ENCODE measurements at regions of chr15 and their contacts with region 1.

Region 1: DNA sequence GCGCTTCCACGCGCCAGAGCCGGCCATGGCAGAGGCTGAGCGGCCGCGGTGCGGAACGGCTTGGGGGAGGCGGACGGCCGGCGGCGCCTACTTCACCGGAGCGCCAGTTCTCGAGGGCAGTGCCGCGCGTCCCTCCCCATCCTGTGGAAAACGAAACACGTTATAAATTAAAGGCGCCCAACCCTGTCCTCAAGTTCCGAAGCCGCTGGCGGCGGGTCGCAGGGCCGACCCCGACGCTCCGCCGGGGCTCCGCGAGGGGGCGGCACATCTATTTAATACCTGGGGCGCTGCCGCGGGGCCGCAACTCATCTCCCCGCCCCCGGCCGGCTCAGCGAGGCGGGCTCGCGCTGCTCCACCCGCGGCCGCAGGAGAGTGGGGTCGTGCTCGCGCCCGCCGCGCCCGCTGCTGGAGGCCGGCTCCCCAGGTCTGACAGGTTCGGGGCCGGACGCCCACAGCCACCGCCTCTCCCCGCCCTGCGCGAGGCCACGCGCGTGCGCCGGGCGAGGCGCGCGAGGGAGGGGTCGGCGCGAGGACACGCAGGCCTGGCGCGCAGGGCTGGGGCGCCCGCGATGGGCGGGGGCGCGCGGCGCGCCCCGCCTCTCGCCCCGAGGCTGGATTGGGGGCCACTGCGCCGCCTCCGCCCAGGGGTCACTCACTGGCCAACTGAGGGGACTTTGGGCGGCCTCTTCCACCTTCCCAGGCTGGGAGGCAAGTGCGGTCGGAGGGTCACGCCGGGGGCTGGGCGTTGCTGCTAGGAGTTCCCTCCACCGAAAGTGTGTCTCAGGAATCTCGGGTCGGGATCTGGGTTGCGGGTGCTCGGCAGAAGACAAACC is at the start of gene SLC30A4:
- DNase-seq: peak; percentile 83
- ATAC-seq: peak; percentile 99
- total RNA-seq, gene SLC30A4: 3.3 TPM

Region 2: GRCh38 chr15:45304711-45305110 is 217.8 kb before region 1 on chr15:
- intact Hi-C with region 1: no loop called
- DNase-seq: no peak
- ATAC-seq: no peak

Region 3: DNA sequence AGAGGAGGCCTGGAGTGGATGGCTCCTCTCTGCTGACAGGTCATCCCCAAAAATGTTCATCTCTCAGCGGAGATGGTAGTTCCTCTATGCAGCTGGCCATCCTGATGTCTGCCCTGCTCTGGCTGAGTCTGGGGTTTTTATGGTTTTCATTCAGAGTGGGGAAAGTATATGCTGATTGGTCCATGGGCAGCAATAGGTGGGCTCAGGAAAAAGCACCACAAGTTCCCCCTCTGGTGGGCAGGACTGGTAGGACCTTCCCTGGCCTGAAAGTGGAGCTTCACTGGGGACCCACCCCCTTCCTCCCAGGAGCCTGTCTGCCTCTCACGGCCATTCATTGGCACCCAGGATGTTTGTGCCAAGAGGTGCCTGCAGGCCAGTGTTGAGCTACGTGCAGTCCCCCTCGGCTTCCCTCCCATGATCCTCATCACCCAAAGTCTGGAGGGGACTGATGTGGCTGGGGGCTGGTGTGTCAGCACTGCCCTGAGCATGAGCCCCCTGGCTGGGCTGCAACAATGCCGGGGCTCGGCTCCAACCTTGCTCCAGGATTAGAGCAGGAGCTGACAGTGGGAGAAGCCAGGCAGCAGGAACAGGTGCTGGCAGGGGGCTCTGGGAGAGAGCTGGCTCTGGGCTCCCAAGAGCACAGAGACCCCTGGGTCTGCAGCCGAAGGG is 51.6 kb after region 1 on chr15:
- intact Hi-C with region 1: no loop called
- DNase-seq: no peak
- ATAC-seq: no peak

Region 4: DNA sequence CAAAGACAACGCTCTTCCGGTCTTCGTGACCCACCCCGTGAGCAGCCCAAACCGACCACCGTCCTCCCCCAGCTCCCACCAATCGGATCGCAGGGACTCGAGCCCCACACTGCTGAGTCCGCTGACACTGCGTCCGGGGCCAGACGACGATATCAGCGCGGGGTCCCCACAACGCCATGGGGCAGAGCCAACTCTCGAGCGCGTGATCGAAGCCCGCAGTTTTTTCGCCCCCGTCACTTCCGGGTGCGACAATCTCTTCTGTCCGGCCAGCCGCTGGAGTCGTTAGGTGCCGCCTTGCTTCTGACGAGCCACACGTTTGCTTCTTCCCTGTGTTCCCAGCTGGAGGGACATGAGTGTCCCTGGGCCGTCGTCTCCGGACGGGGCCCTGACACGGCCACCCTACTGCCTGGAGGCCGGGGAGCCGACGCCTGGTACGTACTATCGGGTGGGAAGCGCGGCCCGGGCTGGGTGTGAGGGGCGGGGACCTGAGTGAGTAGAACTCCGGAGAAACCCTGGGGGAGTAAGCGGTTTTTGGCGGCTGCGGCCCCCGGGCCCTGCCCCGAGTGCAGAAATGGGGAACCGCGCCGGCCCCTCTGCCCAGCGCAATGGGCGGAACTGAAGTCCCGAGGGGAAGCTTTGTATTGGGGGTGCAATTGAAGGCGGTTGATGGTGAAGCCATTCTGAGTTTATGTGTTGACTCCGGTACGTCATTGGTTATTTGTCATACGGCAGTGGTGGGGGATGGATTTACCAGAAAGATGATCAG is 64.7 kb after region 1 on chr15 and contains the start of gene BLOC1S6:
- intact Hi-C with region 1: loop called (anchors 10 kb)
- DNase-seq: peak; percentile 93
- ATAC-seq: peak; percentile 96
- total RNA-seq, gene BLOC1S6: 21.9 TPM

Region 5: GRCh38 chr15:45611305-45611704 is 88.8 kb after region 1 on chr15:
- intact Hi-C with region 1: loop called (anchors 10 kb)
- DNase-seq: no peak
- ATAC-seq: no peak

Region 6: GRCh38 chr15:45664451-45664850 is 141.9 kb after region 1 on chr15:
- intact Hi-C with region 1: no loop called
- DNase-seq: no peak
- ATAC-seq: no peak

Measured in Right ventricle myocardium superior (tissue), 1 donor.